Calu3 (cell line): ENCODE measurements at regions of chr2 and their contacts with region 1.

Region 1: GRCh38 chr2:72887754-72888437 is 688 bp downstream of the SPR start:
- DNase-seq: peak; percentile 93
- H3K4me3 Mint-ChIP-seq: peak overlapping the region; percentile 76
- H3K27ac Mint-ChIP-seq: no peak overlapping the region
- H3K4me1 Mint-ChIP-seq: peaks cover 37% of the 10 kb centered on the region
- H3K27me3 Mint-ChIP-seq: peaks cover 14% of the 10 kb centered on the region
- CTCF ChIP-seq: peak; percentile 82

Region 2: DNA sequence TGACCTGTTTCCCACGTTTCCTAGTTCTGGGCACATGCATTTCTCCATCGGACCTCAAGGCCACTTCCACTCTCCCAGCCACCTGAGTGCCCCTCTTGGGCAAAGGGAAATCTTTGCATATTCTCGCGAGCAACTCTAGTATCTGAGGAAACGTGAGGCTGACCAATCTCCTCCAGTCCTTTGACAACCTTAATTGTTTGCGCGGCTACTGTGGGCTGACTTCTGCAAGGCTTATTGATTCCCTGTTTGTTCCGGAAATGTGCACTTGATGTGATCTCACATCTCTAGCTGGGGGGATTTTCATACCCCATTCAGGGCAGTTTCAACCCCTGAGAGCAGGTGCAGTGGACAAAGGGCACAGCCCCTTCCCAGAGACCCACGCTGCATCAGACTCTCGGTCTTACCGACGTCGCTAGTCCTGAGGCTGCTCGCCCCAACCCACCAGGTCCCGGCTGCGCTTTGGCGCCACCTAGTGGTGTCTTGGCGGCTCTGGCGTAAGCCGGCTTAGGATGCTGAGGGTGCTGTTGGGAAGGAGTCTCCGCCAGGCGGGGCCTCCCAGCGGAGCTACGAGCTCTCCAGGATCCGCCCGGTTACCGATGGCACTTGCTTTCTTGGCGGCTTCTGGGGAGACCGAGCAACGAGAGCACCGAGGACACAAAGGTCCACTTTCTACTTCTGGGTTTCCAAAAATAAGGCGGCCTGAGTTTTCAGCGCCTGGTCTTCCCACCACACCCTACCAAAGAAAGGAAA is 25.5 kb before region 1 on chr2:
- CTCF ChIA-PET with region 1: interaction called, 16 read pairs
- intact Hi-C with region 1: no loop called
- DNase-seq: peak; percentile 96
- H3K4me3 Mint-ChIP-seq: peak overlapping the region; percentile 71
- H3K27ac Mint-ChIP-seq: no peak overlapping the region
- H3K4me1 Mint-ChIP-seq: peaks cover 14% of the 10 kb centered on the region
- H3K27me3 Mint-ChIP-seq: peaks cover 10% of the 10 kb centered on the region
- CTCF ChIP-seq: peak; percentile 94

Region 3: GRCh38 chr2:72934683-72935610 is 47.1 kb after region 1 on chr2:
- CTCF ChIA-PET with region 1: interaction called, 19 read pairs
- intact Hi-C with region 1: loop called (anchors 1 kb)
- DNase-seq: peak; percentile 64
- H3K4me3 Mint-ChIP-seq: no peak overlapping the region
- H3K27ac Mint-ChIP-seq: no peak overlapping the region
- H3K4me1 Mint-ChIP-seq: no peaks in the 10 kb centered on the region
- H3K27me3 Mint-ChIP-seq: peaks cover 39% of the 10 kb centered on the region
- CTCF ChIP-seq: peak; percentile 58

Region 4: GRCh38 chr2:73163483-73164367 is 275.8 kb after region 1 on chr2:
- CTCF ChIA-PET with region 1: no interaction called
- intact Hi-C with region 1: loop called (anchors 5 kb)
- DNase-seq: peak; percentile 80
- H3K4me3 Mint-ChIP-seq: no peak overlapping the region
- H3K27ac Mint-ChIP-seq: no peak overlapping the region
- H3K4me1 Mint-ChIP-seq: no peaks in the 10 kb centered on the region
- H3K27me3 Mint-ChIP-seq: peaks cover 44% of the 10 kb centered on the region
- CTCF ChIP-seq: peak; percentile 90

Region 5: DNA sequence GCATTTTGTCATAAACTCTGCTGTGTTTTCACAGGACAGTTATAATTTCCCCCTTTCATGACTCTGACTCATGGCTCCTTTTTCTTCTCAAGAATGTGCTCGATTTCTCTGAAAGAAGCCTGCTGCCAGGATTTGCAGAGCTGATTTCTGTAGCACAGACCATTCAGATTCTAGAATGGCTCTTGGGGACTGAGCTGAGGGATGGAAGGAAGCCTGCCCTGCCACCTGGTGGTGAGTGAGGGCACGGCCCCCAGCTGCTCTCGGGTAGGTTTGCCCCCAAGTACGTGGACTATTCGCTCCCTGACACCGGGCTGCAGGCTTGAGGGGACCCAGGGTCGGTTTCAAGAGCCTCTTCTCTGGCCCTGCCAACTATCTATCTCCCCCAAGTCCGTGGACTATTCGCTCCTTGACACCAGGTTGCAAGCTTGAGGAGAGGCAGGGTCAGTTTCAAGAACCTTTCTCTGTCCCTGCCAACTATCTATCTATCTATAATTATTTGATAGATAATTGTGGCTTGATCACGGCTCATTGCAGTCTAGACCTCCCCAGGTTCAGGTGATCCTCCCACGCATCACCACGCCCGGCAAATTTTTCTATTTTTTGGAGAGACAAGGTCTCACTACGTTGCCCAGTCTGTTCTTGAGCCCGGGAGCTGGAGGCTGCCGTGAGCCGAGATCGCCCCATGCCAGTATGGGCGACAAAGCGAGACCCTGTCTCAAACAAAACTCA is 324.7 kb after region 1 on chr2:
- CTCF ChIA-PET with region 1: interaction called, 13 read pairs
- intact Hi-C with region 1: no loop called
- DNase-seq: peak; percentile 82
- H3K4me3 Mint-ChIP-seq: no peak overlapping the region
- H3K27ac Mint-ChIP-seq: no peak overlapping the region
- H3K4me1 Mint-ChIP-seq: peaks cover 37% of the 10 kb centered on the region
- H3K27me3 Mint-ChIP-seq: peaks cover 32% of the 10 kb centered on the region
- CTCF ChIP-seq: peak; percentile 87